ENCODE measurements at regions of chr1 and their contacts with region 1.

Region 1: DNA sequence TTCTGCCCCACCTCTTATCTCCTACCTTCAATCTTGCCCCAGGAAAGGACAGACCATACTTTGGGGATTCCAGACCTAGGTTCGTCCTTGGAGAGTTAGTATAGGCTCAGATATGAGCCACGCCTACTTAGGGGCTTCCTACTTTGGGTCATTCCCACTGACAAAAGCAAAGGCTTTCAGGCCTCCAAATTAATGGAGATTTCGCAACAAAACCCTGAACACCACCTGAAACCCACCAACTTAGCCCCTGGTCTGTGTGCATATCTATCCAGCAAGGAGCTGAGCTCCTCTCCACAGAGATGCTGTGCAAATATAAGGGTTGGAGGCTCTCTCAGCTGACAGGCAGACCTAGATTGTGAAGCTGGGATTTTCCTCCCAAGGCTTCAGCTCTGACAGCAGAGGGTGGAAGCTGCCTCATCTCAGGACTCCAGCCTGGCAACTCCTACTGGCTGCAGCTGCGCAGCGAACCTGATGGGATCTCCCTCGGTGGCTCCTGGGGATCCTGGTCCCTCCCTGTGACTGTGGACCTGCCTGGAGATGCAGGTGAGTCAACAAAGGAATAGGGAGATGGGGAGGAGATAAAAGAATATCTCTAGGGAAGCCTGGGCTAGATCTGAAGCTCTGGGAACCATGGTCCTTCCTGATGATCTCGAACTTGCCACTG is 2.1 kb downstream of the MPL start:
- DNase-seq: no peak
- H3K4me3 ChIP-seq: no peak overlapping the region
- H3K27ac ChIP-seq: no peak overlapping the region
- H3K4me1 ChIP-seq: no peaks in the 10 kb centered on the region
- H3K27me3 ChIP-seq: no peaks in the 10 kb centered on the region
- CTCF ChIP-seq: no peak
- POLR2A ChIP-seq: no peak

Region 2: DNA sequence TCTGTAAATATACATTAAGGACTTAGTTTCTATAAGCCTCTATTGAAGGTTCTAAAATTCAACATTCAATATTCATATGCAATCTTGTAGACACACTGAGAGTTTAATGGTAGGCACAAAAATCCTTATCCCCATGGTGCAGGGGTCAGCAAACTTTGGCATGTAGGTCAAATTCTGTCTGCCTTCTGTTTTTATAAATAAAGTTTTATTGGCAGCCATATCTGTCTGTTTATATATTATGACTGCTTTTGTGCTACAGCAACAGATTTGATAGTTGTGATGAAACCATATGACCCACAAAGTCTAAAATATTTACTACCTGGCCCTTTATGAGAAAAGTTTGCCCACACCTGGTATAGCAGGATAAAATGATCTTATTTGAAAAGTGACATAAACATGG is 772.7 kb before region 1 on chr1:
- intact Hi-C with region 1: no loop called
- DNase-seq: no peak
- H3K4me3 ChIP-seq: no peak overlapping the region
- H3K27ac ChIP-seq: no peak overlapping the region
- H3K4me1 ChIP-seq: no peaks in the 10 kb centered on the region
- H3K27me3 ChIP-seq: no peaks in the 10 kb centered on the region
- CTCF ChIP-seq: no peak
- POLR2A ChIP-seq: no peak

Region 3: GRCh38 chr1:43383449-43383848 is 43.7 kb after region 1 on chr1:
- intact Hi-C with region 1: loop called (anchors 1 kb)
- DNase-seq: no peak
- H3K4me3 ChIP-seq: no peak overlapping the region
- H3K27ac ChIP-seq: no peak overlapping the region
- H3K4me1 ChIP-seq: peaks cover 0 to 3% of the 10 kb centered on the region in 2 donors
- H3K27me3 ChIP-seq: no peaks in the 10 kb centered on the region
- CTCF ChIP-seq: peak in 2 of 3 donors; percentile 10 to 11
- POLR2A ChIP-seq: no peak

Measured in breast epithelium (tissue), 4 donors.